IMR-90 (cell line): ENCODE measurements at regions of chr16 and their contacts with region 1.

Region 1: GRCh38 chr16:67993189-67994039 is 5.9 kb downstream of the DPEP2 start:
- DNase-seq: peak; percentile 47
- ATAC-seq: peak; percentile 100
- H3K4me3 ChIP-seq: no peak overlapping the region
- H3K27ac ChIP-seq: no peak overlapping the region
- H3K4me1 ChIP-seq: peaks cover 4% of the 10 kb centered on the region; the same call in 1 of the 2 replicates
- H3K27me3 ChIP-seq: peaks cover 5% of the 10 kb centered on the region; the same call in 1 of the 2 replicates
- CTCF ChIP-seq: peak; percentile 94
- POLR2A ChIP-seq: no peak
- RAD21 ChIP-seq: peak; percentile 70

Region 2: DNA sequence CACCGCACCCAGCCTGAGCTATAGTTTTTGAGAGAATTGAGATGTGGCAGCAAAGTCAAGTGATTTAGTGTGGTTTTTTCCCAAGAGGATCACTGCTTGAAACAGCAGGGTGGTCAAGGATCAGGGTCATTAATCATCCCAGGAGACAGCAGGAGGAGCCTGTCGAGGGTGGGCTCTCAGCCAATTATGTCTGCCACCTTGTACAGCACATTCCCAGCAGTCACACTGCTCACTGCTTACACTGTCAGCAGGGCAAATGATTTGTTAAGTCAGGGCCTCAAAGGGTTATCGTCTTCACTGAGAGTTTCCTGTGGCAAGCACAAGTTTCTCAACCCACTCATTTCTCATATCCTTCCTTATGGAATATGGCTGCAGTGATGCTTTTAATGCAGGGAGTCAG is 855.8 kb before region 1 on chr16:
- CTCF ChIA-PET with region 1: no interaction called
- POLR2A ChIA-PET with region 1: no interaction called
- dilution Hi-C with region 1: no loop called
- in situ Hi-C with region 1: no loop called
- intact Hi-C with region 1: no loop called
- DNase-seq: peak; percentile 31
- ATAC-seq: no peak
- H3K4me3 ChIP-seq: no peak overlapping the region
- H3K27ac ChIP-seq: no peak overlapping the region
- H3K4me1 ChIP-seq: no peaks in the 10 kb centered on the region
- H3K27me3 ChIP-seq: no peaks in the 10 kb centered on the region
- CTCF ChIP-seq: no peak
- POLR2A ChIP-seq: no peak
- RAD21 ChIP-seq: no peak

Region 3: GRCh38 chr16:67430977-67431789 is 562.2 kb before region 1 on chr16 and contains the start of gene HSD11B2:
- CTCF ChIA-PET with region 1: no interaction called
- POLR2A ChIA-PET with region 1: no interaction called
- dilution Hi-C with region 1: no loop called
- in situ Hi-C with region 1: no loop called
- intact Hi-C with region 1: no loop called
- DNase-seq: peak; percentile 45
- ATAC-seq: peak; percentile 84
- H3K4me3 ChIP-seq: peak within 1 kb of the TSS; percentile 42
- H3K27ac ChIP-seq: no peak within 1 kb of the TSS
- H3K4me1 ChIP-seq: peaks cover 5% of the 10 kb centered on the region; the same call in 1 of the 2 replicates
- H3K27me3 ChIP-seq: peaks cover 35% of the 10 kb centered on the region
- CTCF ChIP-seq: peak; percentile 21; the same call in 1 of the 2 replicates
- POLR2A ChIP-seq: no peak
- RAD21 ChIP-seq: peak; percentile 16; the same call in 1 of the 2 replicates
- total RNA-seq, gene HSD11B2: not detected in 2 replicates

Region 4: DNA sequence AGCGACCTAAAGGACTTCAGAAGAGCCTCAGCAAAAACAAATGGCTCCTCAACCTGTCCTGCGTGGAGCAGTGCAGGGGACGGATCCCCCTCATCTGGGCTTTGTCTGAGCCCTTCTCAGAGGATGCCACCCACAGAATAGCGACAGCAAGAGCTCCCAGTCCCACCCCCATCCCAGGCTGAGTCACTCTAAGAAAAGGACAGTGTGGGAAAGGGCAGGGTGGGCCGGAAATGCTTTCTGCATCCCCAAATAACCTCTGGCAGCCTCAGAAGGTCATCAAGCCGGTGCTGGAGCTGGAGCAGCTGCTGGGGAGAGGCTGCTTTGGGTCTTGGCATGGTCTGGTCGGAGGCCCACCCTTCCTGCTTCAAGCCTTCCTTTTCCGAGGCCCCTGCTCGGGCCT is 33.9 kb before region 1 on chr16:
- CTCF ChIA-PET with region 1: no interaction called
- POLR2A ChIA-PET with region 1: no interaction called
- dilution Hi-C with region 1: no loop called
- in situ Hi-C with region 1: no loop called
- intact Hi-C with region 1: no loop called
- DNase-seq: peak; percentile 55
- ATAC-seq: peak; percentile 72
- H3K4me3 ChIP-seq: no peak overlapping the region
- H3K27ac ChIP-seq: peak overlapping the region; percentile 83
- H3K4me1 ChIP-seq: peaks cover 32% of the 10 kb centered on the region
- H3K27me3 ChIP-seq: no peaks in the 10 kb centered on the region
- CTCF ChIP-seq: no peak
- POLR2A ChIP-seq: no peak
- RAD21 ChIP-seq: no peak

Region 5: DNA sequence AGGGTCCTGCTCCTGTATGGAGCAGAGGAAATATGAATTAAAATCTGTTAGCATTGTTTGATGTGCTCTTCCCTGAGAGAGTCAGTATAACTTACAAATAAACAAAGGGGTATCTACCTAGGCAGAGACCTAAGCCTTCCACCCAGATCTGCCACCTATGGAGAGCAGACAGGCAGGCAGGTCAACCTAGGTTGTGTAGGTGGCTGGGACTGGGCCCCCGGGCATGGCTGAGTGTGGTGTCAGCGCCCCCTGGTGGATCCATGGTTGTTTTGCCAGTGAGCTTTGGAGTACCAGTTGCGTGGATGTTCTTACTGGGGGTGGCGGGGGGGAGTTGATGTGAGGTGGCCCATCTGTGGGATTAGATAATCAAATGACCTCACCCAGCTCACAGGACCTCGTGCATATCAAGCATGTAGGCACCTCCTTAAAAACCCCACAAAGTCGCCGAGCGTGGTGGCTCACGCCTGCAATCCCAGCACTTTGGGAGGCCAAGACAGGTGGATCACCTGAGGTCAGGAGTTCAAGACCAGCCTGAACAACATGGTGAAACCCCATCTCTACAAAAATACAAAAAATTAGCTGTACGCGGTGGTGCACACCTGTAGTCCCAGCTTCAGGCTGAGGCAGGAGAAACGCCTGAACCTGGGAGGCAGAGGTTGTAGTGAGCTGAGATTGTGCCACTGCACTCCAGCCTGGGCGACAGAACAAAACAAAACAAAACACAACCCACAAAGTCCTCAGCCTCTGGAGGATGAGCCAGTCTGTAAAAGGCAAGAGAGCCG is 47.3 kb after region 1 on chr16:
- CTCF ChIA-PET with region 1: no interaction called
- POLR2A ChIA-PET with region 1: no interaction called
- dilution Hi-C with region 1: no loop called
- in situ Hi-C with region 1: no loop called
- intact Hi-C with region 1: loop called (anchors 1 kb)
- DNase-seq: peak; percentile 51
- ATAC-seq: peak; percentile 92
- H3K4me3 ChIP-seq: no peak overlapping the region
- H3K27ac ChIP-seq: no peak overlapping the region
- H3K4me1 ChIP-seq: no peaks in the 10 kb centered on the region
- H3K27me3 ChIP-seq: no peaks in the 10 kb centered on the region
- CTCF ChIP-seq: peak; percentile 85
- POLR2A ChIP-seq: no peak
- RAD21 ChIP-seq: peak; percentile 86